B cell (primary cell): ENCODE measurements at regions of chr3 and their contacts with region 1.

Region 1: GRCh38 chr3:53130179-53131061 is at the start of gene RFT1:
- DNase-seq: peak; percentile 98
- ATAC-seq: peak; percentile 90
- H3K4me3 ChIP-seq: peak within 1 kb of the TSS; percentile 76 to 87 (median 87)
- H3K4me3 Mint-ChIP-seq: peak within 1 kb of the TSS; percentile 94
- H3K27ac ChIP-seq: peak within 1 kb of the TSS; percentile 86 to 97
- H3K27ac Mint-ChIP-seq: peak within 1 kb of the TSS; percentile 97
- H3K4me1 ChIP-seq: peaks cover 22 to 23% of the 10 kb centered on the region in 2 donors
- H3K4me1 Mint-ChIP-seq: peaks cover 31% of the 10 kb centered on the region
- H3K27me3 ChIP-seq: no peaks in the 10 kb centered on the region
- H3K27me3 Mint-ChIP-seq: no peaks in the 10 kb centered on the region
- CTCF ChIP-seq: no peak
- total RNA-seq, gene RFT1: 28.9 and 30.7 TPM in 2 replicates

Region 2: DNA sequence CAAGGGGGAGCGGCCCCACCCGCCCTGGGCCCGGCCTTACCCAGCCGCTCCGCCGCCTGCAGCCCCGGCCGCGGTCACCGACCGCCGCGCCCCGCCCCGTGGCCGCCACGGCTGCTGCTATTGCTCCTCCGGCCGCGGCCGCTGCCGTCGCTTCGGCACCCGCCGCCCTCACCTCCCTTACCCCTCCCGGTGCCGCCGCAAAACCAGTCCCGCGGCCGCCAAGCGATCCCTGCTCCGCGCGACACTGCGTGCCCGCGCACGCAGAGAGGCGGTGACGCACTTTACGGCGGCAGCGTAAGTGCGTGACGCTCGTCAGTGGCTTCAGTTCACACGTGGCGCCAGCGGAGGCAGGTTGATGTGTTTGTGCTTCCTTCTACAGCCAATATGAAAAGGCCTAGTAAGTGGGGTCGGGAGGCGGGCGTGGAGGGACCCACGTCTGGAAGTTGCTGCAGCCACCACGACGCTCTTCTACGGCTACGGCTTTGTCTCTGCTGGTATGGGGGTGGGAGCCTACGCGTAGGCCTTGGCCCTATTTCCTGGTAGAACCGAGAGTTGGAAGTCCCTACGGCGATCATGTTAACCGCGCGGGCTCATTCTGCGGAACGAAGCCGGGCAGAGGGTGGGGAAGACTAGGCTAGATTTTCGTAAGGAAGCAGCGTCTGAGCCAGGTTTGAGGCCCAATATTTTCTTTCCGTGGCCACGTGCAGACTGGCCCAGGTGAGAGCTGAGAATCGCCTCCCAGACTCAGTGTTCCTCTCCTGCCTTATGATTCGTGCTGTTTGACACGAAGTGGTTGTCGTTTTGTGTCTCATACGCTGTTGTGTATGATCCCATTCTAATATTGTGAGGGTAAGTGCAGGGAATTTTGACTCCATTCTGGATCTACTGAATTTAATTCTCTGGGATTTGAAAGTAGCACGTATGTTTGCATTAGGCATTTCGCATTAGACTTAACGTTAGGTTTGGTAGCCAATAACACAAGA is 444.4 kb before region 1 on chr3 and contains the starts of genes GNL3 and PBRM1:
- CTCF ChIA-PET with region 1: no interaction called
- POLR2A ChIA-PET with region 1: interaction called, 3 read pairs
- intact Hi-C with region 1: loop called (anchors 5 kb)
- DNase-seq: peak; percentile 98
- ATAC-seq: peak; percentile 86
- H3K4me3 ChIP-seq: peak within 1 kb of the TSS; percentile 67 to 90 (median 86)
- H3K4me3 Mint-ChIP-seq: peak within 1 kb of the TSS; percentile 99
- H3K27ac ChIP-seq: peak within 1 kb of the TSS; percentile 92 to 97
- H3K27ac Mint-ChIP-seq: peak within 1 kb of the TSS; percentile 100
- H3K4me1 ChIP-seq: peaks cover 20 to 21% of the 10 kb centered on the region in 2 donors
- H3K4me1 Mint-ChIP-seq: peaks cover 36% of the 10 kb centered on the region
- H3K27me3 ChIP-seq: no peaks in the 10 kb centered on the region
- H3K27me3 Mint-ChIP-seq: no peaks in the 10 kb centered on the region
- CTCF ChIP-seq: no peak
- total RNA-seq, gene GNL3: 67.3 and 68.5 TPM in 2 replicates
- total RNA-seq, gene PBRM1: 81.1 and 85.9 TPM in 2 replicates

Region 3: DNA sequence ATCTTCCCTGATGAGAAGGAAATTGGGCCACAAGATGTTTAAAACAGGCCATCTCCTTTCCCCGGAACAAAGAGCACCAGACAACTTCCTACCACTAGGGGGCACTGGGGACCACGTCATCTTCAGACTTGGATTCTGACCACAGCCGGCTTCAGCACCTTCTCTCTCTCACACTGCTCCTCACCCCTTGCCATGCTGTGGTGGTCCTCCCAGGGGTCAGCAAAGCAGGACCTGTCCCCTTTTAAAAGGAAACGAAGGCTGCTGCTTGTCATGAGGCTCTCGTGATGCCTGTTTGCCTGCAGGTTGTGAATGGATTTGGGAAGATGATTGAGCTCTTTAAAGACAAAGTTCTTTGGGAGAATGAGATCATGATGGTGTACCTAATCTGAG is 16.4 kb before region 1 on chr3:
- CTCF ChIA-PET with region 1: interaction called, 82 read pairs
- POLR2A ChIA-PET with region 1: no interaction called
- intact Hi-C with region 1: loop called (anchors 1 kb)
- DNase-seq: peak; percentile 86
- ATAC-seq: peak; percentile 84
- H3K4me3 ChIP-seq: no peak overlapping the region
- H3K4me3 Mint-ChIP-seq: no peak overlapping the region
- H3K27ac ChIP-seq: no peak overlapping the region
- H3K27ac Mint-ChIP-seq: no peak overlapping the region
- H3K4me1 ChIP-seq: no peaks in the 10 kb centered on the region
- H3K4me1 Mint-ChIP-seq: no peaks in the 10 kb centered on the region
- H3K27me3 ChIP-seq: no peaks in the 10 kb centered on the region
- H3K27me3 Mint-ChIP-seq: no peaks in the 10 kb centered on the region
- CTCF ChIP-seq: peak; percentile 90

Region 4: GRCh38 chr3:53160660-53161449 is 30.4 kb after region 1 on chr3 and contains the start of gene PRKCD:
- CTCF ChIA-PET with region 1: interaction called, 43 read pairs
- POLR2A ChIA-PET with region 1: interaction called, 22 read pairs
- intact Hi-C with region 1: loop called (anchors 1 kb)
- DNase-seq: peak; percentile 91
- ATAC-seq: peak; percentile 70
- H3K4me3 ChIP-seq: peak within 1 kb of the TSS; percentile 46 to 98 (median 86)
- H3K4me3 Mint-ChIP-seq: peak within 1 kb of the TSS; percentile 94
- H3K27ac ChIP-seq: peak within 1 kb of the TSS; percentile 80 to 82
- H3K27ac Mint-ChIP-seq: peak within 1 kb of the TSS; percentile 96
- H3K4me1 ChIP-seq: peaks cover 44 to 67% of the 10 kb centered on the region in 2 donors
- H3K4me1 Mint-ChIP-seq: peaks cover 54% of the 10 kb centered on the region
- H3K27me3 ChIP-seq: peaks cover 0 to 12% (median 5%) of the 10 kb centered on the region in 4 experiments
- H3K27me3 Mint-ChIP-seq: peaks cover 2% of the 10 kb centered on the region
- CTCF ChIP-seq: peak; percentile 70
- total RNA-seq, gene PRKCD: 42.7 and 46.7 TPM in 2 replicates

Region 5: DNA sequence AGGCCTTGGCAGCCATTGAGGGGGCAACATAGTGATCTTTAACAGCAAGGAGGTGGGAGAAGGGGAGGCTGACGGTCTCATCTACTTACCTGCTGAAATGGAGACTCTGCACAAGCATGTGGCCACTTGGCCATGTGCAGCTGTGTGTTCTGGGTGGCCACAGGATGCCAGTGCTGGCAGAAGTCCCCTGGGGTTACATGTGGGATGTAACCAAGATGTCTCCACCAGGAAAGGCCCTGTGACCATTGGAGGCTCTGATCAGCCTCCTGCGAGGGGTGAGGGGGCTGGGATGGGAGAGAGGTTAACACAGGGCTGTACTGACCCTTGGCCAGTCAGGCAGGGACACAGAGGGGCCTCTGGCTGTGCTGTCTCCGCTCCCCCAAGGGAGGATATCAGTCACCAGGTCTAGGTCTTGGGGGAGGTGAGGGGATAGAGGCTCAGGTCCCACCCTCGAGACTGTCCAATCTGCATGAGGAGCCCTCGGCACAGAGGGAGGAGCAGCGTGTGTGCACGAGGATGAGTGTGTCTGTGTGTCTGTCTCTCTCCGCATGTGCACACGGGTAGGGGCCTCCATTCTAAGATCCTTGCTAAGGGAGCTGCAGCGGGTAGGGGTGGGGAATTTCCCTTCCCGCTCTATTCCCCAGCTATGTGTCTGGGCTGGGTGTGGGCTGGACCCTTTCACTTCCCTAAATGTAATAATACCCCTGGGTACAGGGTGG is 50.0 kb after region 1 on chr3:
- CTCF ChIA-PET with region 1: interaction called, 20 read pairs
- POLR2A ChIA-PET with region 1: interaction called, 6 read pairs
- intact Hi-C with region 1: loop called (anchors 1 kb)
- DNase-seq: peak; percentile 92
- ATAC-seq: peak; percentile 97
- H3K4me3 ChIP-seq: peak overlapping the region in 4 of 5 experiments; percentile 16 to 57 (median 22)
- H3K4me3 Mint-ChIP-seq: peak overlapping the region; percentile 83
- H3K27ac ChIP-seq: peak overlapping the region in 1 of 2 donors; percentile 63
- H3K27ac Mint-ChIP-seq: peak overlapping the region; percentile 82
- H3K4me1 ChIP-seq: peaks cover 40 to 64% of the 10 kb centered on the region in 2 donors
- H3K4me1 Mint-ChIP-seq: peaks cover 54% of the 10 kb centered on the region
- H3K27me3 ChIP-seq: no peaks in the 10 kb centered on the region
- H3K27me3 Mint-ChIP-seq: no peaks in the 10 kb centered on the region
- CTCF ChIP-seq: no peak

Region 6: DNA sequence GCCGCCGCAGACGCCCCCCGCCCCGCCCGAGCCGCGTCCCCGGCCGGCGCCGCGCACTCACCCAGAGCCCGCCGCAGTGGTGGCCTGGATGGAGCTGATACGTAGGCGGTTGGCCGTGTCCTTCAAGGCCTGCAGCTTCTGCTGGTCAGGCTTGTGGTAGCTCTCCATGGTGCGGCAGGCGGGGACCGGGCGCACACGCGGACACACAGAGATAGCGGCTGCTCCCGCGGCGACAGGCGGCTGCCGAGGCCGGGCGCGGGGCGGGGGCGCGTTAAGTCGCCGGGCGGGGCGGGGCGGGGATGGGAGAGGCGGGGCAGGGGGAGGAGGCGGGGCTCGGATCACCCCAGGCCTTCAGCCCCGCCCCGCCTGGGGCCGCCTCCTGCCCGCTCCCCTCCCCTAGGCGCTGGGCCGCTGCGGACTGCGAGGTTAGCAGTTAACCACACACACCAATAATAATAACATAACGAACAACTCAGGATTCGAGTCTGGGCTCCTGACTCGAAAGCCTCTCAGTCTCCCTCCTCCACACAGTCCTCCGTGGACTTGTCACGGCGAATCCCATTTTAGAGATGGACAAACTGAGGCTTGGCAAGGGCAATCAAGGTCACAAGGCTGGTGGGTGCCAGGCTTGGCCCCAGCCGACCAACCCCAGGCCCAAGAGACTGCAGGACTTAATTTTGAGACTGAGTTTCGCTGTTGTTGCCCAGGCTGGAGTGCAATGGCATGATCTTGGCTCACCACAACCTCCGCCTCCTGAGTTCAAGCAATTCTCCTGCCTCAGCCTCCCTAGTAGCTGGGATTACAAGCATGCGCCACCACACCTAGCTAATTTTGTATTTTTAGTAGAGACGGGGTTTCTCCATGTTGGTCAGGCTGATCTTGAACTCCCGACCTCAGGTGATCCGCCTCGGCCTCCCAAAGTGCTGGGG is 125.6 kb after region 1 on chr3 and contains the start of gene TKT:
- CTCF ChIA-PET with region 1: interaction called, 4 read pairs
- POLR2A ChIA-PET with region 1: interaction called, 3 read pairs
- intact Hi-C with region 1: loop called (anchors 1 kb)
- DNase-seq: peak; percentile 87
- ATAC-seq: peak; percentile 87
- H3K4me3 ChIP-seq: peak within 1 kb of the TSS; percentile 72 to 83 (median 75)
- H3K4me3 Mint-ChIP-seq: peak within 1 kb of the TSS; percentile 91
- H3K27ac ChIP-seq: peak within 1 kb of the TSS; percentile 50 to 63
- H3K27ac Mint-ChIP-seq: peak within 1 kb of the TSS; percentile 81
- H3K4me1 ChIP-seq: peaks cover 30 to 42% of the 10 kb centered on the region in 2 donors
- H3K4me1 Mint-ChIP-seq: peaks cover 36% of the 10 kb centered on the region
- H3K27me3 ChIP-seq: no peaks in the 10 kb centered on the region
- H3K27me3 Mint-ChIP-seq: no peaks in the 10 kb centered on the region
- CTCF ChIP-seq: no peak
- total RNA-seq, gene TKT: 81.0 and 85.8 TPM in 2 replicates

Region 7: DNA sequence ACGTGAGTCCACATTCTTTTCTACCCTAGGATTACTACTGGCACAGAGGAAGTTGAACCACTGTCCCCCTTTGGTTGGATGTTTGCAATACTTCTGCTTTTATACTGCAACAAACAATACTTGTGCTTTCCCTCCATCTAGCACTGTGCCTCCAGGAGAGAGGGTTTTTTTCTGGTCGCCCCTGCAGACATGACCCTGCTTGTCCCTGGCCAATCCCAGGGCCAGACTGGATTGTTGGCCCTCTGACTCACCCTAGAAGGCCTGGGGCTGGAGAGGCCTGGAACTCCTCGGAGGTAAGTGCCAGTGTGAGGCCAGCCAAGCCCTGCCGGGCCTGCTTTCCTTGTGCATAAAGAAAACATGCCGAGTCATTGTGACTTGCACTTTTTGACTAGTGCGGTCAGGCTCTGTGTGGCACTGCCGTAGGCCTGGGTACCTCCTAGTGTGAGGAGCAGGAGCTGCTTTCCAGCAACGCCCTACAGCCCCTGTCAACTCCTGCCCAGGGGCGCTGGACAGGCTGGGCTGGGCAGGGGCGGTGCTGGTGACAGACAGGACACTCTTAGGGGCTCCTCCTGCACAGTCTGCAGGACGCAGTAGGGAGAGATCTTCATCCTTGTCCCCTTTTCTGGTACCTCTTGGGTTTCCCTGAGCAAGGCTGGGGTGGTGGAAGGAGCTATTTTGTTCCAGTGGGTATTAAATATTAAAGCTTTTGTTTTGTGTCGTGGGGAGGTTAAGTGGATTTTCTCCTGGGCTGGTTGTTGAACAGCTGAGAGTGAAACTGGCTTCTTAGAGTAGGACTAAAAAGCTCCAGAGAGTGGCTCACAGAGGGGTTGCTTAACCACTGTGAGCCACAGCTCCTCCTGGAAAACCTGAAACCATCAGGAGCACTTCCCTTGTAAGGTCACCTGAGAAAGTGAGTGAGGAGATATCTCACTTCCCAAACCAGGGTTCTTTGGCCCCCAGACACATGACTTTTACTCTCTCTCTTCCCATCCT is 139.8 kb after region 1 on chr3:
- CTCF ChIA-PET with region 1: no interaction called
- POLR2A ChIA-PET with region 1: no interaction called
- intact Hi-C with region 1: no loop called
- DNase-seq: no peak
- ATAC-seq: no peak
- H3K4me3 ChIP-seq: no peak overlapping the region
- H3K4me3 Mint-ChIP-seq: no peak overlapping the region
- H3K27ac ChIP-seq: no peak overlapping the region
- H3K27ac Mint-ChIP-seq: no peak overlapping the region
- H3K4me1 ChIP-seq: peaks cover 0 to 4% of the 10 kb centered on the region in 2 donors
- H3K4me1 Mint-ChIP-seq: peaks cover 1% of the 10 kb centered on the region
- H3K27me3 ChIP-seq: no peaks in the 10 kb centered on the region
- H3K27me3 Mint-ChIP-seq: no peaks in the 10 kb centered on the region
- CTCF ChIP-seq: no peak

Region 8: GRCh38 chr3:53382106-53382505 is 251.7 kb after region 1 on chr3:
- CTCF ChIA-PET with region 1: no interaction called
- POLR2A ChIA-PET with region 1: no interaction called
- intact Hi-C with region 1: no loop called
- DNase-seq: no peak
- ATAC-seq: no peak
- H3K4me3 ChIP-seq: no peak overlapping the region
- H3K4me3 Mint-ChIP-seq: no peak overlapping the region
- H3K27ac ChIP-seq: no peak overlapping the region
- H3K27ac Mint-ChIP-seq: no peak overlapping the region
- H3K4me1 ChIP-seq: no peaks in the 10 kb centered on the region
- H3K4me1 Mint-ChIP-seq: no peaks in the 10 kb centered on the region
- H3K27me3 ChIP-seq: peaks cover 0 to 4% (median 0%) of the 10 kb centered on the region in 4 experiments
- H3K27me3 Mint-ChIP-seq: peaks cover 30% of the 10 kb centered on the region
- CTCF ChIP-seq: no peak